ENCODE measurements at regions of chr11 and their contacts with region 1.

Region 1: DNA sequence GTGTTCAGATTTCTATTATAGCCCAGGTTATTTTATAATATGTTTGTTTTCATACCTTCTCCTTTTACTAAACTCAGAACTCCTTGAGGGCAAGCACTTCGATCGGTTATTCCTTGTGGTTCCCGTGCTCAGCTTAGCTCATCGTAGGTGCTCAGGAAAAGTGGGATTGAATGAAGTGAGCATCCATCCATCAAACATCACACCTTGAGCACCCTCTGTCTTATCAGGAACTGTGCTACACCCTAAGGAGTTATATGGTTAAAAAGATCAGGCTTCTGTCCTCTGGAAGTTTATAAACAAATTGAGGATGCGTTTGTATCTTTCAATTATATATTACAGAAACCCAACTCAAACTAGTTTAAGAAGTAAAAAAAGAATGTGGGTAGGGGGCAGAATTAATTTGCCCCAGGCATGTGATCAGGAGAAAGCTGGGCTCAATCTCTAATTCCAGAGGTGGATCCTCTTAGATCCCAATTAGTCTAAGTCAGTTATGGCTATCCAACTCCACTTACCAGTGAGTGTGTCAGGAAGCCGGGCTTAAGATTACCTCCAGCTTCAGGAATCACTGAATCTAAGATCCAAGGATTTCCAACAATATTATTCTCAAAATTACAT is 59.9 kb upstream of the RRAS2 start:
- DNase-seq: peak; percentile 17
- ATAC-seq: no peak
- H3K4me3 Mint-ChIP-seq: no peak overlapping the region
- H3K27ac Mint-ChIP-seq: no peak overlapping the region
- H3K4me1 Mint-ChIP-seq: peaks cover 32% of the 10 kb centered on the region
- H3K27me3 Mint-ChIP-seq: no peaks in the 10 kb centered on the region

Region 2: DNA sequence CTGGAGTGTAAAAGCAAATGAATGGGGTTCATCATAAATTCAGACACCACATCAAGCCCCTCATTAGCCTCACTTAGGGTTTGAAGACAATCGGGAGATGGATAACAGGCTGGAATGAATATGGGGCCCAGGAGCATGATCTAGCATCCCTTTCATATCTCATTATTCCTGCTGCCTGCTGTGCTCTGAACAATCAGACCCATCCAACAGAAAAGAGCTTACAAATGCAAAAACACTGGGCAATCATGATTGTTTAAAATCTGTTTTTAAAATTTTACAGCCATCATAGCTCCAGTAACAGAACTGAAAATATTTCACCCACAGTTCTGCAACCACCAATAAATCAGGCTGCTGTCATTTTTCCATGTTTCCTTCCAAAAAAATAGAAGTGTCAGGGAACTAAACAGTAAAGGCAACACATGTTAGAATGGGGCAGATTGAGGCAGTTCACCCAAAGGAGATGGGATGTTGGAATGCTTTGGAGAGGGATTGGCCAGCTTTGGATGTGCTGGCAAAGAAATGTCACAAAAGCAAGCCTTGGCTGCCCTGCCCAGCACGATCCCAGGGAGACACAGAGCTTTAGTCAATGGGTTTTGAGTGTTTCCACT is 1189.1 kb before region 1 on chr11:
- CTCF ChIA-PET with region 1: no interaction called
- POLR2A ChIA-PET with region 1: no interaction called
- intact Hi-C with region 1: no loop called
- DNase-seq: no peak
- ATAC-seq: no peak
- H3K4me3 Mint-ChIP-seq: no peak overlapping the region
- H3K27ac Mint-ChIP-seq: no peak overlapping the region
- H3K4me1 Mint-ChIP-seq: no peaks in the 10 kb centered on the region
- H3K27me3 Mint-ChIP-seq: no peaks in the 10 kb centered on the region

Region 3: DNA sequence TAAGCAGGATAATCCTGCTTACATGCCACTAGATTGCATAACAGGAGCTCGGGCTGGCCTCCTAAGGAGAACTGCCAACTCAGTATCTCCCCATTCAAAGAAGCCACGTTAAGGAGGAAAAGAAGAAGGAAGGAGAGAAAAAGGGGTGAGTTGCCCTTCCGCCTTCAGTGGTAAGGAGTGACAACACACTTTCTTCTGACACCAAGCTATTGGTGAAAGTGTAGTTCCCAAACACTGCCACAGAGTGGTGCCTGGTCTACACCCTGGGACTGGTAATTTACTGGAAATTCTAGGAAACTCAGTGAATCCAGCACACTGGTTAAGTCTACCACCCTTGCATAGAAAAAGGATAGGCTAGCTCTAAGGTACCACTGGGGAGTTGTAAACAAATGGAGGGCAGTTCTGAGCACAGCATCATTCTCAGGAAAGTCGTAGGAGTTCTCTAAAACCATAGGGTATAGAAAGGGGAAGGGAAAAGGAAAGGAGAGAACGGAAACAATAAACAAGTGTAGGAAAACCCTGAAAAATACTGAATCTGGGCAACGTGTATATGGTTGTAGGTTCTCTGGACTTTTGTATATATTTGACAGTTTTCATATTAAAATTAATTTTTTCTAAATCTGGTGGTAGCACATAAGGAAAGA is 118.1 kb before region 1 on chr11:
- CTCF ChIA-PET with region 1: interaction called, 9 read pairs
- POLR2A ChIA-PET with region 1: no interaction called
- intact Hi-C with region 1: loop called (anchors 1 kb)
- DNase-seq: peak; percentile 66
- ATAC-seq: peak; percentile 97
- H3K4me3 Mint-ChIP-seq: no peak overlapping the region
- H3K27ac Mint-ChIP-seq: no peak overlapping the region
- H3K4me1 Mint-ChIP-seq: no peaks in the 10 kb centered on the region
- H3K27me3 Mint-ChIP-seq: no peaks in the 10 kb centered on the region

Measured in activated CD4-positive, alpha-beta T cell treated with anti-CD3 and anti-CD28 coated beads for 36 hours (primary cell).